ENCODE measurements at regions of chr4 and their contacts with region 1.

Region 1: DNA sequence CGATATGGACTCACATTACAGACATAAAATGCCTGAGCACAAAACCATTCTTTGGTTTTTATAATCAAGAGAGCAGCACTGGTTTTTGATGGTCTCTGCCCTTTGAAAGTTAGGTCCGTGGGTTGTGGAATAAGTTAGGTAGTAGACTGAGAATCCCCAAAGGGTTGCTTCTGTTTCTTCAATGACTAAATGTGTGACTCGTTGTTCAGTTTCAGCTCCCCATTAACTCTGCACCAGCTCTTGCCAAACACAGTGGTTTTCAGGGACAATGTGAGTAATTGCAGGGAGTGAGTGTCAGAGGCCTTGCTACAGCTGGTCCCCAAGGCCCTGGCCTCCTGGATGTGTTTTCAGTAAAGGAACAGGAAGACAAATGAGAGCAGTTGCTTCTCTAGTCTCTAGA is 24.8 kb downstream of the SMIM20 start:
- DNase-seq: peak; percentile 21
- H3K4me3 Mint-ChIP-seq: peak overlapping the region; percentile 59
- H3K27ac Mint-ChIP-seq: peak overlapping the region; percentile 96
- H3K4me1 Mint-ChIP-seq: peaks cover 34% of the 10 kb centered on the region
- H3K27me3 Mint-ChIP-seq: no peaks in the 10 kb centered on the region

Region 2: DNA sequence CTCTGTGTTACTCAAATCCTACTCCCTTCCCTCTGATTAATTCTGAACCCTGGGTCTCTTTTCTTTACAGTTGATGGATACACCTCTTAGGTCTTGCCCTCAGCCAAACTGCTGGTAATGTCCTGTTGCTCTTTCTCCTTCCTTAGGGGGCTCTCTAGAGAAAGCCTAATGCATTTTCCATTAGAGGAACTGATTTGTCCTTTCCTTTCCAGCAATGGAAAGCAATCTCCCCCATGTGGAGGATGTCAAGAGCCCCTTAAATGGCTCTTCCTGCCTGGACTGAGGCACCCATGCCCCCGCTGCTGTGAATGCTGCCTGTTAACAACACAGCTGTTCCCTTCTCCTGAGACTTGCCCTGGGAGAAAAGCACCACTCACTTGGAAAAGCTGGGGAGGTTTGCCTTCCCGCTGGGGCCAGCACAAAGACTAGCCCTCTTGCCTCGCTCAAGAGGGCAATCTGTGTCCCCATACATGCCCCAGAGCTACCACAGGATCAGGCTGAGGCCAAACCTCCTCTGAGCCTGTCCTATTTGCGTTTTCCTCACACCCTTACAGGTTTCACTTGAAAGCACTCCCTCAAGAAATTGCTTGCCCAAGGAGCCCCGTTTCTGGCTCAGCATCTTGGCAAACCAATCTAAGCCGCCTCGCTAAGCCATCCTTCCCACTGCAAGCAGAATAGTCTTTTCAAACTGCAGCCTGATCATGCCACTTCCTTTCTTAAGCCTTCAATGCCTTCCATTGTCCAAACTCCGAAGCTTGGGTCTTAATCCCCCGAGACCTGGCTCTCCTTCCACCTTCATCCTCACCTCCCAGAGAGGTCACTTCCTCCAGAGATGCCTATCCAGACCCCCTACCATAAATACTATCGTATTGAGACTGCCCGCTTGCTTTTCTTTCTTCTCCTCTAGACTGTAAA is 48.0 kb before region 1 on chr4:
- intact Hi-C with region 1: no loop called
- DNase-seq: no peak
- H3K4me3 Mint-ChIP-seq: no peak overlapping the region
- H3K27ac Mint-ChIP-seq: no peak overlapping the region
- H3K4me1 Mint-ChIP-seq: no peaks in the 10 kb centered on the region
- H3K27me3 Mint-ChIP-seq: no peaks in the 10 kb centered on the region

Region 3: GRCh38 chr4:25913851-25914669 is 24.7 kb before region 1 on chr4 and contains the start of gene SMIM20:
- intact Hi-C with region 1: loop called (anchors 1 kb)
- DNase-seq: peak; percentile 90
- H3K4me3 Mint-ChIP-seq: peak within 1 kb of the TSS; percentile 92
- H3K27ac Mint-ChIP-seq: peak within 1 kb of the TSS; percentile 98
- H3K4me1 Mint-ChIP-seq: peaks cover 21% of the 10 kb centered on the region
- H3K27me3 Mint-ChIP-seq: peaks cover 12% of the 10 kb centered on the region
- total RNA-seq, gene SMIM20: 17.0 and 18.7 TPM in 2 replicates

Region 4: GRCh38 chr4:26009502-26009901 is 70.7 kb after region 1 on chr4:
- intact Hi-C with region 1: loop called (anchors 2 kb)
- DNase-seq: no peak
- H3K4me3 Mint-ChIP-seq: no peak overlapping the region
- H3K27ac Mint-ChIP-seq: no peak overlapping the region
- H3K4me1 Mint-ChIP-seq: peaks cover 42% of the 10 kb centered on the region
- H3K27me3 Mint-ChIP-seq: peaks cover 8% of the 10 kb centered on the region

Region 5: GRCh38 chr4:26062215-26062614 is 123.4 kb after region 1 on chr4:
- intact Hi-C with region 1: no loop called
- DNase-seq: no peak
- H3K4me3 Mint-ChIP-seq: no peak overlapping the region
- H3K27ac Mint-ChIP-seq: no peak overlapping the region
- H3K4me1 Mint-ChIP-seq: peaks cover 22% of the 10 kb centered on the region
- H3K27me3 Mint-ChIP-seq: no peaks in the 10 kb centered on the region

Region 6: GRCh38 chr4:26116092-26116491 is 177.3 kb after region 1 on chr4:
- intact Hi-C with region 1: no loop called
- DNase-seq: no peak
- H3K4me3 Mint-ChIP-seq: no peak overlapping the region
- H3K27ac Mint-ChIP-seq: no peak overlapping the region
- H3K4me1 Mint-ChIP-seq: peaks cover 8% of the 10 kb centered on the region
- H3K27me3 Mint-ChIP-seq: no peaks in the 10 kb centered on the region

Region 7: GRCh38 chr4:26420913-26421312 is 482.1 kb after region 1 on chr4:
- intact Hi-C with region 1: no loop called
- DNase-seq: no peak
- H3K4me3 Mint-ChIP-seq: no peak overlapping the region
- H3K27ac Mint-ChIP-seq: no peak overlapping the region
- H3K4me1 Mint-ChIP-seq: peaks cover 21% of the 10 kb centered on the region
- H3K27me3 Mint-ChIP-seq: no peaks in the 10 kb centered on the region